Mucosa of descending colon (tissue), 3 donors: ENCODE measurements at regions of chr7 and their contacts with region 1.

Region 1: DNA sequence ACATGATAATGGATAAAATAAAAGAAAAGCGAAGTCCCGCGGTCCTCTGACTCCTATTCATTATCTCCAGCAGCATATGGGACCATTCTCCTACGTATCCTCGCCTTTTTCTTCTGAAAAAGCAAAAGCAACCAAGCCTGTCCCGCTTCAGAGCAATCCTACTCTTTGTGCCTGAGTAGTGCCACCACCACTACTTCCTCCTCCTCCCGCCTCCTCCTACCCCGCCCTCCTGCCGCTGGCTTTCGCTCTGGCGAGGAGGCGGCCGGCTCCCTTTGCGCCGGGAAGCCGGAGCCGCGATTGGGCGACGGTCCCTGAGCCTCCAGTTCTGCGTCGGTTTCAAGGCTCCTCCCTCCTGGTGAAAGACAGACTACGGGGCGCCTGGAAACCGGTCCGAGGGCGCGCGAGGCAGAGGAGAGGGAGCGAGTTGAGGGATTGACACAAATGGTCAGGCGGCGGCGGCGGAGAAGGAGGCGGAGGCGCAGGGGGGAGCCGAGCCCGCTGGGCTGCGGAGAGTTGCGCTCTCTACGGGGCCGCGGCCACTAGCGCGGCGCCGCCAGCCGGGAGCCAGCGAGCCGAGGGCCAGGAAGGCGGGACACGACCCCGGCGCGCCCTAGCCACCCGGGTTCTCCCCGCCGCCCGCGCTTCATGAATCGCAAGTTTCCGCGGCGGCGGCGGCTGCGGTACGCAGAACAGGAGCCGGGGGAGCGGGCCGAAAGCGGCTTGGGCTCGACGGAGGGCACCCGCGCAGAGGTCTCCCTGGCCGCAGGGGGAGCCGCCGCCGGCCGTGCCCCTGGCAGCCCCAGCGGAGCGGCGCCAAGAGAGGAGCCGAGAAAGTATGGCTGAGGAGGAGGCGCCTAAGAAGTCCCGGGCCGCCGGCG is at the start of gene FZD1:
- DNase-seq: peak; percentile 94 to 98 (median 96)
- ATAC-seq: peak; percentile 94
- H3K4me3 ChIP-seq: peak within 1 kb of the TSS; percentile 63
- H3K4me1 ChIP-seq: peaks cover 15% of the 10 kb centered on the region
- CTCF ChIP-seq: no peak
- total RNA-seq, gene FZD1: 7.3 to 15.3 (median 8.4) TPM

Region 2: DNA sequence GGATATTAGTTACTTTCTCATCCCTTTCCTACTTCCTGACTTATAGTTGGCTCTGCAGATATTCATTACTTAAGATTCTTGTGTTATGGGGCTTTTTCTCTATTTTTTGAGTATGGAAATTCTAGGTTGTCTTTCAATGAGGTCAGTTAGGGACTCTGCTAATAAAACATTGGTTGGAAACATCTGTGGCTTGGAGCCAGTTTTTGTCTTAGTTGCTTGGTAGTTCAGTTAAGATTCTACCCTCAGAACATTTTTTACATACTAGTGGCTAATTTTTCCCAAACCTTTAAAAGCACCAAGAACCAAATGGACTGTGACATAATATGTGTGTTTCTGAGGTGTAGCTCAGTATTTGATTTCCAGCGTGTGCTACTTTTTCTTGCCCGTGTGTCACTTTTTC is 305.6 kb before region 1 on chr7:
- intact Hi-C with region 1: no loop called
- DNase-seq: no peak
- ATAC-seq: no peak
- H3K4me3 ChIP-seq: no peak overlapping the region
- H3K4me1 ChIP-seq: no peaks in the 10 kb centered on the region
- CTCF ChIP-seq: no peak

Region 3: DNA sequence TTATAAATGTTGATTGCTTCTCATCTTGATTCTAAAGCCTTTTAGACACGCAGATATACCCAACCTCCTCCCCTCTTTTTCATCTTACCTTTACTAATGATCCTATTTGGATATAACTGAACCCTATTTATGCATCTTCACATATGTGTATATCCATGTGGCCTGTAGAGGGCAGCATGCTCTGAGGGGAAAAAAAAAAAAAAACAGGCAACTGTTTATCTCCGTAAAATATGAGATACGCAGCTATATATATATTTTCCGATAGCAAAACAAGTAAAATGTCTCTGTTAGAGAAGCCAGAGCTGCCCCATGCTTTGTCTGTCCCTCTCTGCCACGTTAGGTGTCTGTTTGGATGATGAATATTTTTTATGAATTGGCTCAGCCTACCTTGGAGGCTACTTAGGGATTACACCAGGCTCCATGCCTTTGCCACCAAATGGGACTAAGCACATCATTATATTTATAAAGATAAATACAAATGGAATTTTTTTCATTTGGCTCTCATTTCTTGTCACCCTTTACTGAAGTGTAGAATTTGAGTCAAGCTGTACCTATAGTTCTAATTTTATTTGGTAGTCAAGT is 174.8 kb before region 1 on chr7:
- intact Hi-C with region 1: loop called in 1 of 2 experiments (anchors 10 kb)
- DNase-seq: peak in 1 of 3 donors; percentile 16
- ATAC-seq: peak; percentile 59
- H3K4me3 ChIP-seq: no peak overlapping the region
- H3K4me1 ChIP-seq: peaks cover 3% of the 10 kb centered on the region
- CTCF ChIP-seq: no peak

Region 4: GRCh38 chr7:91330866-91331265 is 66.6 kb after region 1 on chr7:
- intact Hi-C with region 1: no loop called
- DNase-seq: peak in 1 of 3 donors; percentile 12
- ATAC-seq: no peak
- H3K4me3 ChIP-seq: no peak overlapping the region
- H3K4me1 ChIP-seq: no peaks in the 10 kb centered on the region
- CTCF ChIP-seq: no peak

Region 5: DNA sequence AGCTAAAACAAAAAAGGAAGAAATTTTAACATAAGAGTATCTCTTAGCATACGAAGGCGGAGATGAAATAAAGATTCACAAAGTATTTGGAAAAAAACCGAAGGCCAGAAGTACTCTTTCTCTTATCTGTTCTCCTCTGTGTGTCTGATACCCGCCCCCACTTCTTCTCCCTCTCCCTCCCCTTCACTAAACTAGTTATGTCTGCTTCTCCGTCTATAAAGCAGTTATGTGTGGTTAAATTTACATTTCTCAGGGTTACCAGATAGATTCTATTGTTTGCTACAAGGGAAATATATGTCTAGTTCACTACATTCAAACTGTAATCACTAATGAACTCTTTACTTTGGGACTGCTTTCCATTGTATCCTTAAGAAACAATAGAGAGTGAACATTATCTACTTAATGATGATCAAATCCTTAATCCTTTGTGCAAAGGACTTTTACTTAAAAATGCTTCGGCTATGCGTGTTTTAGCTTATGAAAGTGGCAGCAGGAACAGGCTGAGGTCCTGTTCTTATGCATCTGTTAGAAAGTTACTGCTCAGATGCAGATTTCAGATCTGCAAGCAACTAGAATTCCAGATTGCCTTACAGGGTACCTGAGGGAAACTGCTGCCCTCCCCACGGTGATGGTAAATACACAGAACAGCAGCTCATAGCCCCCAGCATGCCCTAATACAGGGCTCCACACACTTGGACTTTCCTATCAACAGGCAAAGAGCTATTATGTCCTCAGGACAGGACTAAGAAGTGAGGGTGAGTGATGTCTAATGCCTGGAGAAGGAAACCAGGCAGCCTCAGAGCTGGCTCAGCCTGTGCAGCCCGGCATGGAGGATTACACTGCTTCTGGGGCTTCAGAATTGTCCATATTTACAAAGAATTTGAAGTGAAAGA is 273.2 kb after region 1 on chr7:
- intact Hi-C with region 1: no loop called
- DNase-seq: no peak
- ATAC-seq: no peak
- H3K4me3 ChIP-seq: no peak overlapping the region
- H3K4me1 ChIP-seq: no peaks in the 10 kb centered on the region
- CTCF ChIP-seq: no peak